Psoas muscle (tissue), 8 donors: ENCODE measurements at regions of chr6 and their contacts with region 1.

Region 1: GRCh38 chr6:36765594-36766398 is 68.2 kb downstream of the RAB44 start:
- DNase-seq: peak; percentile 81 to 89
- ATAC-seq: peak; percentile 64 to 86 (median 68)
- H3K4me3 ChIP-seq: no peak overlapping the region
- H3K27ac ChIP-seq: no peak overlapping the region
- H3K4me1 ChIP-seq: peaks cover 19% of the 10 kb centered on the region
- H3K27me3 ChIP-seq: no peaks in the 10 kb centered on the region
- CTCF ChIP-seq: peak; percentile 89

Region 2: DNA sequence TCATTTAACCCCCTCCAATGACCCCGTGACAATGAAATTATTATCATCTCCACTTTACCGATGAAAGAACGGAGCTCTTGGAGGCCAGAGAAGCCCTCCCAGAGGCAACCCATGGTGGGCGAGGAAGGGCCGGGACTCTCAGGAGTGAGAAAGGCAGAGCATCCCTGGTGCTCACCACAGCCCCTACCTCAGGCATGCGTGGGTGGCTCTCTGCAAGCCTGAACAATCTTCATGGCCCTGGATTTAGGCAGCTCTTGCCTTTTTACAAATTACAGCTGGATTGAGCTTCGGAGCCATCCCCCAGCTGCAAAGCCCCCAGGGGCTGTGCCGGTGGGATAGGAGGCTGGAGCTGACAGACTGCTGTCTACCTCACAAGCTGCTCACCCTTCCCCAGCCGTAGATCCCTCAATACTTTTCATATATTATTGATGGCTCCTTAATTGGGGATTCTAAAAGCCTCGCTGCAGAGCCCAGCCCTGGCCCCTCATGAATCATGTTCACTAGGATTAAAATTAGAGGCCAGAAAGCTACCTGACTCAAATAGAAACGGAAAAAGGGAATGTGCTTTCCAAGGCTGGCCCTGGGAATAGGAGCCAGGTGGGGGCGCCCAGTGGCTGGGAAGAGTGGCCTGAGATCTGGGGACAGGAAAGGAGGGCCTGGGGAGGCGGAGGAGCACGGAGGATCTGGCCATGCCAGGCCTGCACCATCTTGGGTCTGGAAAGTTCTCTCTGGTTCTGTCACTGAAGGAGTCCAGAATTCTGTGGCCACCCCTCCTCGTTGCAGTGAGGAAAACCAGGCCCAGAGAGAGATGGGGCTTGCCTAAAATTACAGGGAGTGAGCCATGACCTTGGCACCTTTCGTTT is 44.4 kb after region 1 on chr6:
- intact Hi-C with region 1: no loop called
- DNase-seq: no peak
- ATAC-seq: peak in 1 of 4 donors; percentile 46
- H3K4me3 ChIP-seq: no peak overlapping the region
- H3K27ac ChIP-seq: no peak overlapping the region
- H3K4me1 ChIP-seq: no peaks in the 10 kb centered on the region
- H3K27me3 ChIP-seq: no peaks in the 10 kb centered on the region
- CTCF ChIP-seq: no peak

Region 3: GRCh38 chr6:36820700-36821580 is 55.1 kb after region 1 on chr6:
- intact Hi-C with region 1: no loop called
- DNase-seq: no peak
- ATAC-seq: no peak
- H3K4me3 ChIP-seq: no peak overlapping the region
- H3K27ac ChIP-seq: no peak overlapping the region
- H3K4me1 ChIP-seq: peaks cover 3% of the 10 kb centered on the region
- H3K27me3 ChIP-seq: no peaks in the 10 kb centered on the region
- CTCF ChIP-seq: no peak

Region 4: GRCh38 chr6:36839749-36840431 is 74.1 kb after region 1 on chr6:
- intact Hi-C with region 1: loop called in 1 of 2 experiments (anchors 2 kb)
- DNase-seq: peak; percentile 56 to 70
- ATAC-seq: peak; percentile 23 to 54 (median 43)
- H3K4me3 ChIP-seq: peak overlapping the region; percentile 67
- H3K27ac ChIP-seq: peak overlapping the region; percentile 81
- H3K4me1 ChIP-seq: peaks cover 48% of the 10 kb centered on the region
- H3K27me3 ChIP-seq: peaks cover 0 to 4% (median 0%) of the 10 kb centered on the region in 3 donors
- CTCF ChIP-seq: peak; percentile 26

Region 5: DNA sequence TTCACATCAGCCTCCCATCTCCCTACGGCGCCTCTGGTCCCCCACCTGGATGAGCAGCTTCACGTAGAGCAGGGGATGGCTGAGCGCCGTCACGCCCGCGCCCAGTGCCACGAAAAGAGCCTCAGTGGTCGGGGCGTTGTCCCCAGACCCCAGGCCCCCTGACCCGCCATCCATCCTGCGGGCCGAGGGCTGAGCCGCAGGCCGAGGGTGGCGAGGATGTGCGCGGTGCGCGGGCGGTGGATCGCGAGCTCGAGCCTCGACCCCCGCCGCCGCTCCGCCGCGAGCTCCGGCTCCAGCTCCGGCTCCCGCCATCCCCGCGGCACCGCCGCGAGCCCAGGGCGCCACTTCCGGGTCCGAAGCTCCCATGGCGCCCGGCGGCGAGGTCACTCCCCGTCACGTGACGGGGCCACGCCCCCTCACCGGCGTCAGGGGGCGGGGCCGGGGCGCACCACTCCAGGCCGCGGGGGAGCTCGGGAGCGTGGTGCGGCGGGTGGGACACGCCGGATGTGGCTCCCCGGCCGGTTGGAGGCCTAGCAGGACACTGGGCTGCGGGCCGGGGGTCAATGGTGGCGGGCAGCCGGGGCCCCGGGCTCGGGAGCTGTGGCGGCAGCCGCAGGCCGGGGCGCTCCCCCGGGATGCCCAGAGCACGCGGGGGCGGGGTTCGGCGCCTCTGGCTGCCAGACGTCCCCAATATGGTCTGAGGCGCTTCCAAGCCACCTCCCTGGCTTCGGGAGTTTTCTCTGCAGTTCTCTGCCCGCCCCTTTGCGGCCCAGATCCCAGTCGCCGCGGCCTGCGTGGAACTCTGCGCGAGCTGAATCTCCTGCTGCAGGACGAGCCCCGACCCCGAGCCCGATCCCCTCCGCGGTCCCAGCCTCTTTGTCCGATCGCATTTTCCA is 220.3 kb after region 1 on chr6 and contains the start of gene MTCH1:
- intact Hi-C with region 1: loop called in 1 of 2 experiments (anchors 10 kb)
- DNase-seq: peak; percentile 89 to 96
- ATAC-seq: peak; percentile 95 to 97 (median 96)
- H3K4me3 ChIP-seq: peak within 1 kb of the TSS; percentile 98
- H3K27ac ChIP-seq: peak within 1 kb of the TSS; percentile 94
- H3K4me1 ChIP-seq: peaks cover 35% of the 10 kb centered on the region
- H3K27me3 ChIP-seq: no peaks in the 10 kb centered on the region
- CTCF ChIP-seq: no peak
- total RNA-seq, gene MTCH1: 74.6 to 89.2 (median 85.4) TPM

Region 6: GRCh38 chr6:37169496-37170272 is 403.9 kb after region 1 on chr6 and contains the start of gene PIM1:
- intact Hi-C with region 1: loop called in 1 of 2 experiments (anchors 10 kb)
- DNase-seq: peak; percentile 100
- ATAC-seq: peak; percentile 88 to 94 (median 90)
- H3K4me3 ChIP-seq: peak within 1 kb of the TSS; percentile 97
- H3K27ac ChIP-seq: peak within 1 kb of the TSS; percentile 94
- H3K4me1 ChIP-seq: peaks cover 10% of the 10 kb centered on the region
- H3K27me3 ChIP-seq: no peaks in the 10 kb centered on the region
- CTCF ChIP-seq: no peak
- total RNA-seq, gene PIM1: 18.0 to 45.5 (median 32.8) TPM

Region 7: DNA sequence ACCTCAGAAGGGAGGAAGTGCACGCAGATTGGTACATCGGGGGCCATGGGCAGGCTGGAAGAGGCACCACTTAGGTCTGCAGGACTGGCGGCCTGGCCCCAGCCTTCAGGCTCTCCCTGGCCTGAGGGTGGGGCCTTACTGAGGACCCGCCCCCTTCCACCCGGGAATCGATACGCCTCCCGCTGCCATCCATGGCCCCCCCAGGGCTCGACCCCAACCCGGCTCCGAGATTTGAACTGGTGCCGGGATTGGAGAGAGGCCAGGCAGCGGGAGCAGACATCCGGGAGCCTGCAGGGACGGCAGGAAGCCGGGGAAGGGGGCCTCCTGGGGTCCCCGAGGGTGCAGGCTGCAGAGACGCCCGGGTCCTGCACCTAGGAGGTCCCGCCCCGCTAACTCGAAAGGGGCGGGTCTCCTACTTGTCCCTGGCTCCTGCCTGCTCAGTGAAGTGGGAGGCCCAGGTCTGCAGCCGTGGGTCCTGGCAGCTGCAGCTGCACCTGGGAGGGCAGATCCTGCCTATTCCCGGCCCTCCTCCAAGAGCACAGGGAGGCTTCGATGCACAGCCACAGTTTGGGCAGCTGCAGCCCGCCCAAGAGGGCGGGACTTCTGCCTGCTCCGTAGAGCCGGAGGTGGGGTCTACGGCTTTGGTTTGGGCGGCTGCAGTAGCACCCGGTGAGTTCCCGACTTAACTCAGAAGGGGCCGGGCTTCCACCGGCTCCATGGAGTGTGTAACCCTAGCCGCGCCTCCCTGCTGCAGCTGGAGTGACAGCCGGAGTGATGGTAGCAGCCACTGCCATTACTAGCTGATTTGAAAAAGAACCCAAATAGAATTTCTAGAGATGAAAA is 456.6 kb after region 1 on chr6:
- intact Hi-C with region 1: loop called in 1 of 2 experiments (anchors 5 kb)
- DNase-seq: peak; percentile 66 to 79
- ATAC-seq: peak; percentile 87 to 93 (median 91)
- H3K4me3 ChIP-seq: peak overlapping the region; percentile 74
- H3K27ac ChIP-seq: peak overlapping the region; percentile 15
- H3K4me1 ChIP-seq: peaks cover 8% of the 10 kb centered on the region
- H3K27me3 ChIP-seq: no peaks in the 10 kb centered on the region
- CTCF ChIP-seq: no peak